Activated CD4-positive, alpha-beta T cell treated with anti-CD3 and anti-CD28 coated beads, Interleukin-2, amount 10 ng/mL, durations not matched to agents 24 days and 14 days (primary cell): ENCODE measurements at regions of chr20 and their contacts with region 1.

Region 1: GRCh38 chr20:35994994-35995453 is 26.6 kb downstream of the CNBD2 start:
- DNase-seq: peak; percentile 90
- H3K4me3 Mint-ChIP-seq: no peak overlapping the region
- H3K27ac Mint-ChIP-seq: no peak overlapping the region
- H3K4me1 Mint-ChIP-seq: peaks cover 2% of the 10 kb centered on the region
- H3K27me3 Mint-ChIP-seq: peaks cover 13% of the 10 kb centered on the region

Region 2: GRCh38 chr20:36085686-36086267 is 90.8 kb after region 1 on chr20:
- intact Hi-C with region 1: no loop called
- DNase-seq: no peak
- H3K4me3 Mint-ChIP-seq: no peak overlapping the region
- H3K27ac Mint-ChIP-seq: no peak overlapping the region
- H3K4me1 Mint-ChIP-seq: no peaks in the 10 kb centered on the region
- H3K27me3 Mint-ChIP-seq: peaks cover 28% of the 10 kb centered on the region

Region 3: DNA sequence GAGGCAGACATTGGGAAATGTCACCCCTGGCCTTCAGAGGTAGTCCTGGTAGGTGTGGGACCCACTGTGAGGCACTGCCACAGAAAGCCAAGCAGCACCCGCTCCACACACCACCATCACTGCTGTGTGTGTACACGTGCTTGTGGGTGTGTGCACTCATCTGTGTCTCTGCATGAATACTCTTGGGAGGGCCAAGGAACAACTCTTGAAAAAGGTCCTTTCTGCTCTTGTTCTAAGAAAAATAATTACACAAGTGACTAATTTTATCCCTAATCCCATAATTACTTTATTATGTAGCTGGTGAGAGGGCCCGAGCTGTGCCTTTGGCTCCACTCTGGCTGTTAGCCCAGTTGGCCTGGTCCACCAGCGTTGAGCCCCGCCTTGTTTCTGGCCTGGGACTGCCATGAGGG is 137.8 kb after region 1 on chr20:
- intact Hi-C with region 1: loop called (anchors 1 kb)
- DNase-seq: no peak
- H3K4me3 Mint-ChIP-seq: no peak overlapping the region
- H3K27ac Mint-ChIP-seq: no peak overlapping the region
- H3K4me1 Mint-ChIP-seq: no peaks in the 10 kb centered on the region
- H3K27me3 Mint-ChIP-seq: peaks cover 1% of the 10 kb centered on the region

Region 4: GRCh38 chr20:36199345-36200257 is 204.6 kb after region 1 on chr20:
- intact Hi-C with region 1: loop called (anchors 1 kb)
- DNase-seq: peak; percentile 92
- H3K4me3 Mint-ChIP-seq: no peak overlapping the region
- H3K27ac Mint-ChIP-seq: no peak overlapping the region
- H3K4me1 Mint-ChIP-seq: peaks cover 5% of the 10 kb centered on the region
- H3K27me3 Mint-ChIP-seq: peaks cover 11% of the 10 kb centered on the region

Region 5: DNA sequence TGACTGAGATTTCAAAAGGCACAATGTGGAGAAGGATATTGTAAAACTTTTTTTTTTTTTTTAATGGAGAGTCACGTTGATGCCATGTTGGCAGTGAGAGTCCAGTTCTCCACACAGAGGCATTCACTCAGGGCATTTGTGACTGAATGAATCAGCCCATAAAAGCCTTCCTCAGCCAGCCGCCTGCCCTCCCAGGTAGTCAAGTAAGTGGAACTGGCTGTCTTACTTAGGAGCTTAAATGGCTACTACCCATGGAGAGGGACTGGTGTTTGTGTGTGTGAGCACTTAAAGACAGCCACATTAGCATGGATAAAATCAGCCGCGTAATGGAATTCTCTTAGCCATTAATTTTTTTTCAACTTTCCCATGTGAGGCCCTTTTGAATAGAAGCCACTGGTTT is 253.8 kb after region 1 on chr20:
- intact Hi-C with region 1: no loop called
- DNase-seq: no peak
- H3K4me3 Mint-ChIP-seq: no peak overlapping the region
- H3K27ac Mint-ChIP-seq: no peak overlapping the region
- H3K4me1 Mint-ChIP-seq: peaks cover 13% of the 10 kb centered on the region
- H3K27me3 Mint-ChIP-seq: no peaks in the 10 kb centered on the region